ENCODE measurements at regions of chr18 and their contacts with region 1.

Region 1: GRCh38 chr18:57561728-57562423 is 24.6 kb downstream of the FECH start:
- DNase-seq: peak in 7 of 9 donors; percentile 14 to 58 (median 40)
- ATAC-seq: peak; percentile 74
- H3K4me3 ChIP-seq: no peak overlapping the region
- H3K4me3 Mint-ChIP-seq: no peak overlapping the region
- H3K27ac ChIP-seq: no peak overlapping the region
- H3K27ac Mint-ChIP-seq: no peak overlapping the region
- H3K4me1 ChIP-seq: no peaks in the 10 kb centered on the region
- H3K4me1 Mint-ChIP-seq: peaks cover 0 to 5% (median 4%) of the 10 kb centered on the region in 7 donors
- H3K27me3 ChIP-seq: no peaks in the 10 kb centered on the region
- H3K27me3 Mint-ChIP-seq: no peaks in the 10 kb centered on the region

Region 2: DNA sequence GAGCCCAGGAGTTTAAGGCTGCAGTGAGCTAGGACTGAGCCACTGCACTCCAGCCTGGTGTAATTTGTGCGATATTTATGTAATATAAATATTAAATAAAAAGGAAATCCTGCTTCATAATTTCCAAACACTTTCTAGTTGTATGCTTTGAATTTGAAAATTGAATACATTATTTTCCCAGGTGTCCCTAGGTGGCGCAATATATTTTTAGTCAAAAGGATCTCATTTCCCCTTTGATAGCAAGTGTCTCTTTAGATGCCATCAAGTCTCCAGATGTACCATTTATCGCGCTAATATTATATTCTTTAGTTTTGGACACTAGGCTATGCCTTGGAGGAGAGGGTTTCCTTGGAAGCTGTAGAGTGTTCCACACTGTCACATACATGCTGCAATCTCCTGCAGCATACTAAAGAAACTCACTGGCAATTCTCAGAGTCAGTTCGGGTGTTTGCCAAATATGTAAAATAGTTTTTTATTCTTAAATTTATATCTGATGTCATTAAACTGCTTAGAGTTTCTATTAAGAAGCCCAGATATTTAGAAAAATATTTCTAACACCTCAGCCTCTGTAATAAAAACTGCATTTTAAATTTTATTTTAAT is 916.4 kb before region 1 on chr18:
- CTCF ChIA-PET with region 1: no interaction called
- POLR2A ChIA-PET with region 1: no interaction called
- intact Hi-C with region 1: loop called in 1 of 2 experiments (anchors 1 kb)
- DNase-seq: peak in 6 of 9 donors; percentile 21 to 46 (median 28)
- ATAC-seq: peak; percentile 67
- H3K4me3 ChIP-seq: no peak overlapping the region
- H3K4me3 Mint-ChIP-seq: no peak overlapping the region
- H3K27ac ChIP-seq: no peak overlapping the region
- H3K27ac Mint-ChIP-seq: no peak overlapping the region
- H3K4me1 ChIP-seq: peaks cover 0 to 2% of the 10 kb centered on the region in 2 donors
- H3K4me1 Mint-ChIP-seq: peaks cover 3 to 34% (median 7%) of the 10 kb centered on the region in 7 donors
- H3K27me3 ChIP-seq: no peaks in the 10 kb centered on the region
- H3K27me3 Mint-ChIP-seq: no peaks in the 10 kb centered on the region

Region 3: DNA sequence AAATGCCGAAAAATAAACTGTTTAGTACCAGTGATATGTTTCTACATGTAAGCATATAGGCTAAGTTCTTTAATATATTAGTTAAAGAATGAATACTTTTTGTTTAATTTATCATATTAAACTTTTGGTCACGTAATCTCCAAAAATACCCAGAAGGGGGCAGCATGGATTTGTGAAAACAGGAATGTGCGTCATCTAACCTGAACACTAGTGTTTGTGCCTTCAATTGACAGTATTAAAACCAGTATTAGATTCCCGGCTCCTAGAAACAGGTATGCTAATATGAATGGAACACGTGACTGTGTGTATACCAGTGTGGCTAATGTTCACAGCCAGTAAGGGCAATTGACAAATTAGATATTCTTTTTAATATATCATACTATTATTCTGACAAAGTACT is 858.9 kb before region 1 on chr18:
- CTCF ChIA-PET with region 1: interaction called, 4 read pairs
- POLR2A ChIA-PET with region 1: no interaction called
- intact Hi-C with region 1: loop called (anchors 1 kb)
- DNase-seq: peak in 6 of 9 donors; percentile 7 to 27 (median 18)
- ATAC-seq: peak; percentile 56
- H3K4me3 ChIP-seq: no peak overlapping the region
- H3K4me3 Mint-ChIP-seq: no peak overlapping the region
- H3K27ac ChIP-seq: no peak overlapping the region
- H3K27ac Mint-ChIP-seq: no peak overlapping the region
- H3K4me1 ChIP-seq: no peaks in the 10 kb centered on the region
- H3K4me1 Mint-ChIP-seq: peaks cover 0 to 4% (median 1%) of the 10 kb centered on the region in 7 donors
- H3K27me3 ChIP-seq: no peaks in the 10 kb centered on the region
- H3K27me3 Mint-ChIP-seq: no peaks in the 10 kb centered on the region

Region 4: DNA sequence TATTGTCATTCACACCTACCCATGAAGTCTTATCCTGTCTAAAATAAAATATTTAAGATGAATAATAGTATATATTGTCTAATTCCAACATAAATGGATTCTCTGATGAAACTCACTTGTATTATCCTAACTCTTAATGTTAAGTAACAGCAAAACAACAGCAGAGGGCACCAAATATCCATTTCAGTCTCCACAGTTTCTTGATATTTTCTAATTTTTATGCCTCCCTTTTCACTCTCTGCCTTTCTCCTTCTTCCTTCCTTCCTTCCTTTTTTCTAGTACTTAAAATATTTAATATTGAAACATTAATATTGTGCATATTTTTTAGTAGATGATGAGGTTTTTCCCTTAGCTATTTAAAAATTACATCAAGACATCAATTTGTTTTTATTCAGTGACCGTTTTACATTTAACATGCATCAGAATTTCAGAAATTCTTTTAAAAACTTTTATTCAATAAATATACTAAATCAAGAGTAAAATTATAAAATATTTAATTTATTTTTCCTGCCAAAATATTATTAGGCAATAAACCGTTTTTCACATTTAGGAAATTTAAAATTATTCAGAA is 813.1 kb before region 1 on chr18:
- CTCF ChIA-PET with region 1: interaction called, 3 read pairs
- POLR2A ChIA-PET with region 1: no interaction called
- intact Hi-C with region 1: loop called (anchors 1 kb)
- DNase-seq: peak in 5 of 9 donors; percentile 5 to 31 (median 14)
- ATAC-seq: no peak
- H3K4me3 ChIP-seq: no peak overlapping the region
- H3K4me3 Mint-ChIP-seq: no peak overlapping the region
- H3K27ac ChIP-seq: no peak overlapping the region
- H3K27ac Mint-ChIP-seq: no peak overlapping the region
- H3K4me1 ChIP-seq: peaks cover 4 to 5% of the 10 kb centered on the region in 2 donors
- H3K4me1 Mint-ChIP-seq: peaks cover 15 to 24% (median 21%) of the 10 kb centered on the region in 7 donors
- H3K27me3 ChIP-seq: no peaks in the 10 kb centered on the region
- H3K27me3 Mint-ChIP-seq: no peaks in the 10 kb centered on the region

Region 5: DNA sequence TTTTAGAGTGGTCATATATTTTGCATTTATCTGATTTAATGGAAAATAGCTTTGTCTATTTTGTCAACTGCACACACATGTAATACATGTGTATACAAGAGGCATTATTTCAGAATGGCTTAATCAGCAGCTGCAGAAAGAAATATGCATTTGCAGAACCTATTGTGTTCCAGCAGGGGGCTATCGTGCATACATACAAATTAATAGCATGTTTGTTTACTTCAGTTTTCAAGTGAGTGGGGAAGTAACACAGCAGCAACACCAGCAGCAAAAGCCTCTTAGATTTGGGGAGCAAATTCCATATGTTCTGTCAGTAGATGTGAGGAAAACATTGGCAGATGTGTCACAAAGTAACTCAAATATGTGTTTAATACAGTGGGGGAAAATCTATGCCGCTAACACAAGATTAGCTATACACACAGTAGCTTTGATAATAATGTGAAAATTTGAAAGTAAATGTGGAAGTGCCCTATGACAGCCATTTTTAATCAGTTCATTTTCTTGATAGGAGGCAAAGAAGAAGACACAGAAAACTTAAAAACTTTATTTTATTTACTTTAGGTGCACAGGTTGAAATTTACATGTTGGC is 692.6 kb before region 1 on chr18:
- CTCF ChIA-PET with region 1: no interaction called
- POLR2A ChIA-PET with region 1: no interaction called
- intact Hi-C with region 1: loop called in 1 of 2 experiments (anchors 1 kb)
- DNase-seq: peak in 5 of 9 donors; percentile 10 to 27 (median 19)
- ATAC-seq: peak; percentile 75
- H3K4me3 ChIP-seq: no peak overlapping the region
- H3K4me3 Mint-ChIP-seq: no peak overlapping the region
- H3K27ac ChIP-seq: no peak overlapping the region
- H3K27ac Mint-ChIP-seq: no peak overlapping the region
- H3K4me1 ChIP-seq: peaks cover 0 to 14% of the 10 kb centered on the region in 2 donors
- H3K4me1 Mint-ChIP-seq: peaks cover 7 to 28% (median 19%) of the 10 kb centered on the region in 7 donors
- H3K27me3 ChIP-seq: no peaks in the 10 kb centered on the region
- H3K27me3 Mint-ChIP-seq: no peaks in the 10 kb centered on the region

Region 6: DNA sequence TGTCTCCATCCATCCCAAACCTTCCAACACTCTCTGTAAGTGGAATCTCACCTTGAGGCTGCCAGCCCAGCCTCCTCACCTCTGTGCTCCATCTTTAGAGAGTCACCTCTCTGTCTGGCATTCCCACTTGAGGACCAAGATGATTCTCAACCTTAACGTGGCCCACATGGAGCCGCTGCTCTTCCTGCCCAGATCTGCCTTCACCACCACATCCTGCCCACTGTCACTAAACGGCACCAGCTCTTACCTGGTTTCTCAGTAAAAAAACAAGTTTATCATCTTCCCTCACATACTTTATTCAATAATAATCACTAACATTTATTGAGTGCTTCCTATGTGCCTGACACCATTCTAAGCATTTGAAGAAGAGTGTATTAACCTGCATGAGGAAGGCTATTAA is 562.6 kb after region 1 on chr18:
- CTCF ChIA-PET with region 1: no interaction called
- POLR2A ChIA-PET with region 1: no interaction called
- intact Hi-C with region 1: loop called (anchors 5 kb)
- DNase-seq: no peak
- ATAC-seq: no peak
- H3K4me3 ChIP-seq: no peak overlapping the region
- H3K4me3 Mint-ChIP-seq: no peak overlapping the region
- H3K27ac ChIP-seq: no peak overlapping the region
- H3K27ac Mint-ChIP-seq: peak overlapping the region in 2 of 9 donors; percentile 7 to 58
- H3K4me1 ChIP-seq: no peaks in the 10 kb centered on the region
- H3K4me1 Mint-ChIP-seq: peaks cover 0 to 3% (median 0%) of the 10 kb centered on the region in 7 donors
- H3K27me3 ChIP-seq: no peaks in the 10 kb centered on the region
- H3K27me3 Mint-ChIP-seq: peaks cover 0 to 9% (median 3%) of the 10 kb centered on the region in 5 donors